ENCODE measurements at regions of chr4 and their contacts with region 1.

Region 1: DNA sequence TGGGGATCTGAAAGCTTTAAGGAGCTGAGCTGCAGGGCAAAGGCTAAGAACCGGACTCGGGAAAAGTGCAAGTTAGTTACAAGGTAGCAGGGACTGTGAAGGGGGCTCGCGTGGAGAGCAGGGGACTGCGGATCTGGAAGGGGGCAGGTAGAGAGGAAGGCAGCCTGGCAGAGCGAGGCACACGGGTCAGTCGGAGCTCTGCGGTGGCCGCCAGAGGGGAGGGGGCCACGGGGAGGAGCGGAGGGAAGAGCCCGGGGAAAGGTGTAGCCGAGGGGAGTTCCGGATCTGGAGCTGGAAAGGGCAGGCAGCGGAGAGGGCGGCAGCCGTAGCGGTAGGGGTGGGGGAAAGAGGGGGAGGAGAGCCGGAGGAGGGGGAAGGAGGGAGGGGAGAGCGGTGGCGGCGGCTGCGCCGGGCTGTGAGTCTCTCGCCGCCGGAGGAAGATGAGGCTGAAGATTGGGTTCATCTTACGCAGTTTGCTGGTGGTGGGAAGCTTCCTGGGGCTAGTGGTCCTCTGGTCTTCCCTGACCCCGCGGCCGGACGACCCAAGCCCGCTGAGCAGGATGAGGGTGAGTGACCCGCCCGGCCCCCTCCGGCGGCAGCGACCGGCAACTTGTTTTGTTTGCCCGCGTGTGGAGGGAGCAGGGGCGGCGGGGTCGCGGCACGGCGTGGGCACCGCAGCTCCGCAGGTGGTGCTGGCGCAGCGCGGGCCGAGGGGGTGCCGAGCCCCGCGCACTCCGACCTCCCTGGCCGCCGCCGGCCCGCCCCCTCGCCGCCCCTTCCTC is at the start of gene GALNT7:
- DNase-seq: peak; percentile 66
- H3K4me3 ChIP-seq: peak within 1 kb of the TSS; percentile 80 to 96 (median 84)
- H3K27ac ChIP-seq: peak within 1 kb of the TSS; percentile 76
- H3K4me1 ChIP-seq: peaks cover 20% of the 10 kb centered on the region
- H3K27me3 ChIP-seq: no peaks in the 10 kb centered on the region
- CTCF ChIP-seq: no peak
- total RNA-seq, gene GALNT7: 13.5 to 17.0 TPM

Region 2: GRCh38 chr4:173013232-173013930 is 155.2 kb before region 1 on chr4:
- CTCF ChIA-PET with region 1: interaction called, 3 read pairs
- dilution Hi-C with region 1: no loop called
- in situ Hi-C with region 1: loop called in 1 of 2 experiments (anchors 10 kb)
- intact Hi-C with region 1: no loop called
- DNase-seq: no peak
- H3K4me3 ChIP-seq: no peak overlapping the region
- H3K27ac ChIP-seq: no peak overlapping the region
- H3K4me1 ChIP-seq: no peaks in the 10 kb centered on the region
- H3K27me3 ChIP-seq: no peaks in the 10 kb centered on the region
- CTCF ChIP-seq: peak; percentile 41 to 65

Region 3: GRCh38 chr4:173181769-173182354 is 13.3 kb after region 1 on chr4:
- CTCF ChIA-PET with region 1: no interaction called
- dilution Hi-C with region 1: no loop called
- in situ Hi-C with region 1: no loop called
- intact Hi-C with region 1: loop called (anchors 1 kb)
- DNase-seq: peak; percentile 68
- H3K4me3 ChIP-seq: no peak overlapping the region
- H3K27ac ChIP-seq: peak overlapping the region; percentile 77
- H3K4me1 ChIP-seq: peaks cover 16% of the 10 kb centered on the region
- H3K27me3 ChIP-seq: no peaks in the 10 kb centered on the region
- CTCF ChIP-seq: no peak

Region 4: DNA sequence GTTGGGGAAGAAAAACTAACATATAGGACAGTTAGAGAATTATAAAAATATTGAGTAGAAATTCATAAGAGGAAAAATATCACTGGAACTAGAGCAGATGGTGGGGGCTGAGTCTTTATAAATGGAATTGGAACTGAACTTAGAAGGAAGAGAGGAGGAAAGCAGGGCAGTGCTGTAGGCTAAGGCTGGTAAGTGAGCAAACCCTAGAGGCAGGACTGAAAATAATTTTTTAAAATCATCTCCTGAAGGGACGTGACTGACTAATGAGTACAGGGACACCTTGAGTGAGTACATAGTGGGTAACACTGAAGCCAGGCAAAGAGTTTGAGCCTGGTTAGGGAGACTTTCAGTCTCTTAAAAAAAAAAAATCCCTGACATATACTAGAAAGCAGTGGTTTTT is 63.3 kb after region 1 on chr4:
- CTCF ChIA-PET with region 1: no interaction called
- dilution Hi-C with region 1: no loop called
- in situ Hi-C with region 1: no loop called
- intact Hi-C with region 1: loop called (anchors 1 kb)
- DNase-seq: peak; percentile 32
- H3K4me3 ChIP-seq: no peak overlapping the region
- H3K27ac ChIP-seq: no peak overlapping the region
- H3K4me1 ChIP-seq: no peaks in the 10 kb centered on the region
- H3K27me3 ChIP-seq: no peaks in the 10 kb centered on the region
- CTCF ChIP-seq: peak; percentile 27 to 59

Region 5: GRCh38 chr4:173257732-173258717 is 89.4 kb after region 1 on chr4:
- CTCF ChIA-PET with region 1: no interaction called
- dilution Hi-C with region 1: no loop called
- in situ Hi-C with region 1: no loop called
- intact Hi-C with region 1: loop called (anchors 1 kb)
- DNase-seq: peak; percentile 38
- H3K4me3 ChIP-seq: no peak overlapping the region
- H3K27ac ChIP-seq: no peak overlapping the region
- H3K4me1 ChIP-seq: peaks cover 2% of the 10 kb centered on the region
- H3K27me3 ChIP-seq: no peaks in the 10 kb centered on the region
- CTCF ChIP-seq: peak; percentile 84 to 91